Activated naive CD4-positive, alpha-beta T cell treated with anti-CD3 and anti-CD28 coated beads for 36 hours (primary cell): ENCODE measurements at regions of chr1 and their contacts with region 1.

Region 1: GRCh38 chr1:89358287-89358893 is 5.5 kb upstream of the GBP6 start:
- DNase-seq: peak; percentile 91
- H3K4me3 Mint-ChIP-seq: peak overlapping the region; percentile 33
- H3K27ac Mint-ChIP-seq: peak overlapping the region; percentile 65
- H3K4me1 Mint-ChIP-seq: peaks cover 33% of the 10 kb centered on the region
- H3K27me3 Mint-ChIP-seq: no peaks in the 10 kb centered on the region

Region 2: GRCh38 chr1:88973520-88974137 is 384.8 kb before region 1 on chr1:
- CTCF ChIA-PET with region 1: interaction called, 7 read pairs
- intact Hi-C with region 1: loop called (anchors 1 kb)
- DNase-seq: no peak
- H3K4me3 Mint-ChIP-seq: no peak overlapping the region
- H3K27ac Mint-ChIP-seq: no peak overlapping the region
- H3K4me1 Mint-ChIP-seq: peaks cover 27% of the 10 kb centered on the region
- H3K27me3 Mint-ChIP-seq: no peaks in the 10 kb centered on the region

Region 3: DNA sequence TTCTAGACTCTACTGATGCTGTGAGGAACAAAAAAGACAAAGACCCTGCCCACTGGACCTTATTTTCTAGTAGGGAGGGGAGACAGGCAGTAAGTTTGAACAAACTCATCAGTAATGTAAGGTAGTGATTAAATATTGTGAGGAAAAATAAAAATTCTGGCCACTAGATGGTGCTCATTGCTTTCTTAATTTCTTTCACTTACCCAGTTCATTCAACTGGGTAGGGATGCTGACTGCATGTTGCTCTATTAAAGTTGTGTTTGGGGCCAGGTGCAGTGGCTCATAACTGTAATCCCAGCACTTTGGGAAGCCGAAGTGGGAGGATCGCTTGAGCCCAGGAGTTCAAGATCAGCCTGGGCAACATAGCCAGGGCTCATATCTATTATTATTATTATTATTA is 359.7 kb before region 1 on chr1:
- CTCF ChIA-PET with region 1: interaction called, 35 read pairs
- intact Hi-C with region 1: loop called (anchors 1 kb)
- DNase-seq: peak; percentile 33
- H3K4me3 Mint-ChIP-seq: no peak overlapping the region
- H3K27ac Mint-ChIP-seq: no peak overlapping the region
- H3K4me1 Mint-ChIP-seq: peaks cover 27% of the 10 kb centered on the region
- H3K27me3 Mint-ChIP-seq: peaks cover 4% of the 10 kb centered on the region

Region 4: DNA sequence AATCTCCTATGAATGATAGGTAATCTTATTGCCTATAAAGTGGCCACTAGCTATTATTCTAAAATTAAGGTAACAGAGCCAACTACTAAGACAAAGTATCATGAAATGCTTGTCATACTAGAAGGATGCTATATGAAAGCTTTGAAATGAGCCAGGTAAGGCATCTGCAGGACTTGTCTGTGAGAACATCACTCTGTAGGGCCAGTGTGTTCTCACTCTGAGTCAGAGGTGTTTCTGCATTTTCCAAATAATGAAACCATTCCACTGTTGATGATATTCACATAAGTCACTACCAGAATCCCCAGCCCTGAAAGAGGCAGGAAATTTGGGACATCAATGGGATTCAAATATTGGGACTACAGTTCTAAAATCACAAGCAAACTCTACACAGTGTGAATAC is 59.9 kb before region 1 on chr1:
- CTCF ChIA-PET with region 1: interaction called, 9 read pairs
- intact Hi-C with region 1: loop called (anchors 1 kb)
- DNase-seq: no peak
- H3K4me3 Mint-ChIP-seq: no peak overlapping the region
- H3K27ac Mint-ChIP-seq: no peak overlapping the region
- H3K4me1 Mint-ChIP-seq: peaks cover 55% of the 10 kb centered on the region
- H3K27me3 Mint-ChIP-seq: no peaks in the 10 kb centered on the region

Region 5: GRCh38 chr1:89381618-89382017 is 23.2 kb after region 1 on chr1:
- CTCF ChIA-PET with region 1: interaction called, 3 read pairs
- intact Hi-C with region 1: loop called (anchors 1 kb)
- DNase-seq: no peak
- H3K4me3 Mint-ChIP-seq: no peak overlapping the region
- H3K27ac Mint-ChIP-seq: no peak overlapping the region
- H3K4me1 Mint-ChIP-seq: peaks cover 8% of the 10 kb centered on the region
- H3K27me3 Mint-ChIP-seq: no peaks in the 10 kb centered on the region